Naive thymus-derived CD4-positive, alpha-beta T cell (primary cell): ENCODE measurements at regions of chr12 and their contacts with region 1.

Region 1: GRCh38 chr12:130818635-130819576 is 20.1 kb downstream of the STX2 start:
- DNase-seq: peak; percentile 54 to 90 (median 73)
- ATAC-seq: peak; percentile 97
- H3K4me3 ChIP-seq: peak overlapping the region; percentile 80
- H3K4me3 Mint-ChIP-seq: peak overlapping the region; percentile 85 to 96 (median 89)
- H3K27ac ChIP-seq: peak overlapping the region; percentile 56
- H3K27ac Mint-ChIP-seq: peak overlapping the region in 7 of 9 donors; percentile 54 to 87 (median 77)
- H3K4me1 ChIP-seq: no peaks in the 10 kb centered on the region
- H3K4me1 Mint-ChIP-seq: peaks cover 10 to 25% (median 11%) of the 10 kb centered on the region in 7 donors
- H3K27me3 ChIP-seq: no peaks in the 10 kb centered on the region
- H3K27me3 Mint-ChIP-seq: no peaks in the 10 kb centered on the region

Region 2: DNA sequence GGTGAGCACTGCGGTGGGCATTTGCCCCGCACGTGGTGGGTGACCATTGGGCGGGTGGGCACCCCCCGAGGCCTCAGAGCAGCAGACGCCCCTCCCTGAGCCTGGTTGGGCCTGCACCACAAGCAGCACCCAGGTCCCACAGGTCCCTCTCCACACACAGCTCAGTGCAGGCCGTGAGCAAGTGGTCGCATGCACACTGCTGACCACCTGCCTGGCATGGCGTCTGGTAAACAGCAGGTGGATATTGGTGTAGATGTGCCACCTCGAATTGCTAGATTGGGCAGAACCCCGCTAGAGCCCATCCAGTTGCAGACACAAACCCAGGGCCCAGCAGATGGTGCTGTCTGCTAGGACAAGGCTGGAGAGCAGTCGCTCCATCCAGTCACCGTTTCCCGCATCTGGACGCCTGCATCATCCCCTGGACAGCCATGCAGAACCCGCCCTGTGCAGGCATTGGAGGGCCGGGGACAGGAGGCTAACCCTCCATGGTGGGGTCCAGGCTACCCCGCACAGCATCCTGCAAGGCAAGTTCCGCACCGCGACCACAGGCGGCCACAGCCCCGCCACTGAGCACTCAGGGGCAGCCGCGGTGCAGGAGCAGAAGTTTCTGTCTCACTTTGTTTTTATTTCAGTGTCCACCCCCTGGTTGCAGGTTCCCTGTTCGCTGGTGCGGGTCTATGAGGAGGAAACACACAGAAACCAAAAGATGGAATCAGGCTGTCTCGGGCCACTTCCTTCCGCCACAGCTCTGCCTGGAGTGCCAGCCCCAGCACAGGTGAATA is 57.2 kb before region 1 on chr12:
- CTCF ChIA-PET with region 1: interaction called, 5 read pairs
- POLR2A ChIA-PET with region 1: no interaction called
- intact Hi-C with region 1: loop called (anchors 1 kb)
- DNase-seq: peak; percentile 21 to 62 (median 41)
- ATAC-seq: peak; percentile 68
- H3K4me3 ChIP-seq: peak overlapping the region; percentile 45
- H3K4me3 Mint-ChIP-seq: peak overlapping the region; percentile 39 to 77 (median 68)
- H3K27ac ChIP-seq: no peak overlapping the region
- H3K27ac Mint-ChIP-seq: peak overlapping the region in 1 of 9 donors; percentile 22
- H3K4me1 ChIP-seq: peaks cover 0 to 10% of the 10 kb centered on the region in 2 donors
- H3K4me1 Mint-ChIP-seq: peaks cover 5 to 18% (median 12%) of the 10 kb centered on the region in 7 donors
- H3K27me3 ChIP-seq: no peaks in the 10 kb centered on the region
- H3K27me3 Mint-ChIP-seq: peaks cover 0 to 6% (median 0%) of the 10 kb centered on the region in 5 donors

Region 3: DNA sequence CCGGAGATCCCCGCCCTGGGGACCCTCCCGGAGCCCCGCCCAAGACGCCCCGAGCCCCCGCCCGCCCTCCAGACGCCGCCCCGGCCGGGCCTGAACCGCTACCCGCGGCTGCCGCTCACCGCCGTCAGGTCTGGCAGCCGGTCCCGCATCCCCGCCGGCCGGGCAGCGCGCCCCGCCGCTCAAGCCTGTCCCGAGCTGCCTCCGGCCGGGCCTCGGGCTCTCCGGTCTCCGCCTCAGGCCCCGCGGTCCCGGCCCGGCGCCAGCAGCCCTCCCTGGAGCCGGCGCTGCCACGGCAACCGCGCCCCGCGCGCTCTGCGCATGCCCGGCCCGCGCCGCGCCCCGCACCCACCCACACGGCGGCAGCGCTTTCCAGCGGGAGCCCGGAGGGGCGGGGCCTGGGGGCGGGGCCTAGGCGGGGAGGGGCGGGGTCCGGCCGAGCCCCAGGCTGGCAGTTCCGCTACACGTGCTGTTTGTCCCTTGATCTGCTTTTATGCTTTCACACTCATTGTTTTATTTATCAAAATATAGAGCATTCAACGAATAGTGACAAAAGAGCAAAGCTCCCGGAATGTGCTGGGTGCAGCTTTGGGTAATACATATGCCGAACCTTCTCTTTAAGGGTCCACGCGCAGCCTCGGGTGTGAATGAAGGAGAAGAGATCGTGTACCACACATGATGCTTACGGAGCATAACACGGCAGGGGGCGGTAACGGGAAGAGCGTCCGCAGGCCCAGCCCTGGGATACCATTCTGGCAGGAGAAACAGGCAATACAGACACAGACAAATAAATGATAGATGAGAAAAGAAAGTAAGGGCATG is 20.3 kb after region 1 on chr12 and contains the start of gene STX2:
- CTCF ChIA-PET with region 1: no interaction called
- POLR2A ChIA-PET with region 1: interaction called, 3 read pairs
- intact Hi-C with region 1: loop called (anchors 1 to 2 kb)
- DNase-seq: peak; percentile 82 to 96 (median 92)
- ATAC-seq: peak; percentile 99
- H3K4me3 ChIP-seq: peak within 1 kb of the TSS; percentile 84
- H3K4me3 Mint-ChIP-seq: peak within 1 kb of the TSS; percentile 81 to 90 (median 84)
- H3K27ac ChIP-seq: peak within 1 kb of the TSS; percentile 65
- H3K27ac Mint-ChIP-seq: peak within 1 kb of the TSS; percentile 83 to 92 (median 90)
- H3K4me1 ChIP-seq: peaks cover 4 to 10% of the 10 kb centered on the region in 2 donors
- H3K4me1 Mint-ChIP-seq: peaks cover 12 to 38% (median 32%) of the 10 kb centered on the region in 7 donors
- H3K27me3 ChIP-seq: no peaks in the 10 kb centered on the region
- H3K27me3 Mint-ChIP-seq: no peaks in the 10 kb centered on the region
- total RNA-seq, gene STX2: 15.3 to 30.3 (median 21.5) TPM

Region 4: DNA sequence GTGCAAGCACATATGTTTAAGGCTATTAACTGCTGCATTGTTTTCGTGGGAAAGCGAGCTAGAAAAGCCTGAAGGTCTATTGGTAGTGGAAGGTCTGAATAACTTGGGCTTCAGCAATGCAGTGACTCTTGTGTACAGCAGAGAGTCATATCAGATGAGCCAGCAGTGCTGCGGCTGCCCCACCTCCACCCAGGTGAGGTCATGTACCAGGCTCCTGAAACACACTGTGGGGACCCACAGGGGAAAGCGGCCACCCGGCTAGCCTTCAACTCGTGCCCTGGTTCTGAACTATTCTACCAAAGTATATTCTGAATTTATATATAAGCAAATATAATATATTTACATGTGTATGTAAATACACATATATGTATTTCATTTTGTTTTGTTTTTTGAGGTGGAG is 40.3 kb after region 1 on chr12:
- CTCF ChIA-PET with region 1: no interaction called
- POLR2A ChIA-PET with region 1: no interaction called
- intact Hi-C with region 1: no loop called
- DNase-seq: no peak
- ATAC-seq: no peak
- H3K4me3 ChIP-seq: no peak overlapping the region
- H3K4me3 Mint-ChIP-seq: no peak overlapping the region
- H3K27ac ChIP-seq: no peak overlapping the region
- H3K27ac Mint-ChIP-seq: no peak overlapping the region
- H3K4me1 ChIP-seq: no peaks in the 10 kb centered on the region
- H3K4me1 Mint-ChIP-seq: peaks cover 0 to 4% (median 0%) of the 10 kb centered on the region in 7 donors
- H3K27me3 ChIP-seq: no peaks in the 10 kb centered on the region
- H3K27me3 Mint-ChIP-seq: peaks cover 0 to 9% (median 6%) of the 10 kb centered on the region in 5 donors

Region 5: DNA sequence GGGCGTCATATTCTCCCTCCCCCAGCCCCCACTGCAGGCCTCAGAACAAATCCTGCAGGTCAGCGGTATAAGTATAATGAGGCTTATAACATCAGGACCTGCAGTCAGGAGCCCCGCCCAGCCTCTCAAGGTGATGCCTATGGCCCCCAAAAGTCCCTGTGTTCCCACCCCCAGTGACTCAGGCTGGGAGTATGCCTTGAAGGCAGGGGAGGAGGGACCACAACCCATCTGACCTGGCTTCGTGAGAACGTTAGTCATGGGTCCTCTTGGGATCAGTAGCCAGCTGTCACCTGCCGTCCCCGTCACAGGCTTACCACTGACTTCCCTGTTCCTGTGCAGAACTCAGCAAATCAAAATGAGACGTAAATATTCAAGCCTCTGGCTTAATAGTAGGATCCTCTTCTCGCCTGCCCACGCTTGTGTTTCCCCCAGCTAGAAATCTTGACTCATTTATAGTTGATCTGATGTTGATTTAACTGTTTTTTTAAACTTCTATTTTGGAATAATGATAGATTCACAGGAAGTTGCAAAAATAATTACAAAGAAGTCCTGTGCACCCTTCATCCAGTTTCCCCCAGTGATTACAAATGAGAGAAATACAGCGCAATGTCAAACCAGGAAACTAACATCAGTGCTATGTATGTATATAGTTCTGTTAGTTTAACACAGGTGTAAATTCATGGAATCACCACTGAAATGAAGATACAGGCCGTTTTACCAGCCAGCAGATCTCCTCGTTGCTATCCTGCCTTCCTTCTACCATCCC is 242.3 kb after region 1 on chr12:
- CTCF ChIA-PET with region 1: no interaction called
- POLR2A ChIA-PET with region 1: no interaction called
- intact Hi-C with region 1: no loop called
- DNase-seq: no peak
- ATAC-seq: no peak
- H3K4me3 ChIP-seq: no peak overlapping the region
- H3K4me3 Mint-ChIP-seq: no peak overlapping the region
- H3K27ac ChIP-seq: no peak overlapping the region
- H3K27ac Mint-ChIP-seq: no peak overlapping the region
- H3K4me1 ChIP-seq: no peaks in the 10 kb centered on the region
- H3K4me1 Mint-ChIP-seq: no peaks in the 10 kb centered on the region
- H3K27me3 ChIP-seq: no peaks in the 10 kb centered on the region
- H3K27me3 Mint-ChIP-seq: peaks cover 19 to 45% (median 28%) of the 10 kb centered on the region in 5 donors

Region 6: GRCh38 chr12:131204416-131205274 is 385.7 kb after region 1 on chr12:
- CTCF ChIA-PET with region 1: no interaction called
- POLR2A ChIA-PET with region 1: no interaction called
- intact Hi-C with region 1: no loop called
- DNase-seq: peak in 1 of 9 donors; percentile 9
- ATAC-seq: no peak
- H3K4me3 ChIP-seq: no peak overlapping the region
- H3K4me3 Mint-ChIP-seq: no peak overlapping the region
- H3K27ac ChIP-seq: no peak overlapping the region
- H3K27ac Mint-ChIP-seq: no peak overlapping the region
- H3K4me1 ChIP-seq: peaks cover 0 to 8% of the 10 kb centered on the region in 2 donors
- H3K4me1 Mint-ChIP-seq: peaks cover 0 to 10% (median 6%) of the 10 kb centered on the region in 7 donors
- H3K27me3 ChIP-seq: no peaks in the 10 kb centered on the region
- H3K27me3 Mint-ChIP-seq: no peaks in the 10 kb centered on the region